Gastrocnemius medialis (tissue), 4 donors: ENCODE measurements at regions of chr12 and their contacts with region 1.

Region 1: DNA sequence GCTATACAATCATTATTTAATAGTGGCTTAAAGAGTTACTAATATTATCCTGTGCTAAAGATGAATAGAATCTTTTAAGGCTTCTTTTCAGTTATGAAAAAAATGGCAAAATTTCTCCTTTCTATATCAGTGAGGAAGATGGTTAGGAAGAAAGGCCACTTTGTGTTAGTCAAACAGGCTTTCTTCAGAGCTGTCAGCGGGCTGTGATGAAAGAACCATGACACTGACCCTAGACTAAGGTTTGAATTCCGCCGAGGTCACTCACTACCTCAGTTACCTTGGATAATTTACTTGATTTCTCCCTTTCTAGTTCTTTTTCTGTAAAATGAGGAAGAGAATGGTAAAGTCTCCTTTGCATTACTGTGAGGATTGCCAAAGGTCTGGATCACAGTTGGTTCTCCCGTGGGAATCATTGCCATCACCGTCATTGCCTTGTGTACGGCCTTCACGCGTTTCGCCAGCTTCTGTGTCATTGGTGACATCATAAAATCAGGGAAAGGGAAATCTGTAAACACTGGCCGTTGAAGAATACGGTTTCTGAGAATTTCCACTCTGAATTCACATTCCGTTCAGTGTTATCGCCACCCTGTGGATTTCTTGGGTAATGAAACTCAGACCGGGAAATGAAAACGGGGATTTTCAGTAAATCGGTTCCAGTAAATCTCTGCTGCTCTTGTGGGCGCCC is 26.7 kb upstream of the YBX3 start:
- DNase-seq: peak; percentile 45 to 66
- ATAC-seq: peak; percentile 93 to 97
- H3K4me3 ChIP-seq: peak overlapping the region; percentile 42 to 51 (median 48)
- H3K27ac ChIP-seq: peak overlapping the region; percentile 50 to 72 (median 62)
- H3K4me1 ChIP-seq: peaks cover 0 to 5% of the 10 kb centered on the region in 2 donors
- H3K27me3 ChIP-seq: no peaks in the 10 kb centered on the region
- CTCF ChIP-seq: peak; percentile 86 to 93 (median 89)
- POLR2A ChIP-seq: peak in 1 of 2 donors; percentile 13

Region 2: GRCh38 chr12:10235761-10236631 is 513.8 kb before region 1 on chr12:
- in situ Hi-C with region 1: loop called in 2 of 4 experiments (anchors 10 kb)
- intact Hi-C with region 1: loop called (anchors 5 kb)
- DNase-seq: no peak
- ATAC-seq: peak; percentile 70 to 76
- H3K4me3 ChIP-seq: no peak overlapping the region
- H3K27ac ChIP-seq: no peak overlapping the region
- H3K4me1 ChIP-seq: no peaks in the 10 kb centered on the region
- H3K27me3 ChIP-seq: no peaks in the 10 kb centered on the region
- CTCF ChIP-seq: peak; percentile 77 to 85 (median 84)
- POLR2A ChIP-seq: no peak

Region 3: DNA sequence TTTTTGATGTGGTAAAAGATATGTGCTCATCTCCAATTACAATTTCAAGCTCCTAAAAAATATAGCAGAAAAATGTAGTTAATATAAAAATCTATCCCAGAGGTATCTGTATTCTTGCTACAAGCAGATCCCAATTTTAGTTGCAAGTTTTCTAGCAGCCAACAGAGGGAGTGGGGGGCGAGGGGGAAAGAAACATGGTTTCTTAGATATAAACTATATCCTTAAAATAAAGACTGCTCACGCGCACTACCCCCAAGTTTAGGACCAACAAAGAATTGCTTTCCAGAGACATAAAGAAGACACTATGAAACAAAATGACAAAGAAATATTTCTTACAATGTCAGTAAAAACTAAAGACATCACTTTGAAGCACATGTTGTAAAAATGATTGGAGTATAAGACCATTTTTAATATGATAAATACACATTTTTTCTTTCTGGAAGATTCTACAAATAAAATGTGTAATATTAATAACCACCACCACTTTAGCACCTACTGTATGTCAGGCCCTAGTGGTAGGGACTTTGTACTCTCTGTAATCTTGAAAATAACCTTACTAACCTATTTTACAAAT is 141.9 kb before region 1 on chr12:
- in situ Hi-C with region 1: loop called (anchors 5 to 10 kb)
- intact Hi-C with region 1: loop called (anchors 1 kb)
- DNase-seq: no peak
- ATAC-seq: no peak
- H3K4me3 ChIP-seq: no peak overlapping the region
- H3K27ac ChIP-seq: no peak overlapping the region
- H3K4me1 ChIP-seq: peaks cover 11 to 12% of the 10 kb centered on the region in 2 donors
- H3K27me3 ChIP-seq: no peaks in the 10 kb centered on the region
- CTCF ChIP-seq: no peak
- POLR2A ChIP-seq: no peak

Region 4: GRCh38 chr12:10613349-10614055 is 136.3 kb before region 1 on chr12 and contains the start of gene MAGOHB:
- in situ Hi-C with region 1: loop called (anchors 5 to 10 kb)
- intact Hi-C with region 1: loop called (anchors 1 kb)
- DNase-seq: peak; percentile 82 to 93
- ATAC-seq: peak; percentile 98 to 99
- H3K4me3 ChIP-seq: peak within 1 kb of the TSS; percentile 68 to 89 (median 79)
- H3K27ac ChIP-seq: peak within 1 kb of the TSS; percentile 90 to 91 (median 90)
- H3K4me1 ChIP-seq: peaks cover 12 to 16% of the 10 kb centered on the region in 2 donors
- H3K27me3 ChIP-seq: no peaks in the 10 kb centered on the region
- CTCF ChIP-seq: peak in 2 of 5 experiments; percentile 49 to 52
- POLR2A ChIP-seq: peak; percentile 51 to 82
- total RNA-seq, gene MAGOHB: 0.80 to 6.3 (median 3.8) TPM

Region 5: GRCh38 chr12:10673660-10674384 is 76.0 kb before region 1 on chr12 and contains the start of gene STYK1:
- in situ Hi-C with region 1: no loop called
- intact Hi-C with region 1: loop called (anchors 2 kb)
- DNase-seq: no peak
- ATAC-seq: peak in 1 of 2 donors; percentile 57
- H3K4me3 ChIP-seq: peak within 1 kb of the TSS; percentile 50 to 63 (median 52)
- H3K27ac ChIP-seq: no peak within 1 kb of the TSS
- H3K4me1 ChIP-seq: peaks cover 5 to 6% of the 10 kb centered on the region in 2 donors
- H3K27me3 ChIP-seq: peaks cover 18 to 25% (median 24%) of the 10 kb centered on the region in 3 donors
- CTCF ChIP-seq: peak; percentile 48 to 81 (median 77)
- POLR2A ChIP-seq: no peak
- total RNA-seq, gene STYK1: 0.12 TPM in 1 of 4 donors, not detected in the others

Region 6: GRCh38 chr12:10690906-10691305 is 58.9 kb before region 1 on chr12:
- in situ Hi-C with region 1: loop called in 1 of 4 experiments (anchors 10 kb)
- intact Hi-C with region 1: loop called (anchors 5 kb)
- DNase-seq: no peak
- ATAC-seq: no peak
- H3K4me3 ChIP-seq: no peak overlapping the region
- H3K27ac ChIP-seq: peak overlapping the region in 1 of 4 donors; percentile 13
- H3K4me1 ChIP-seq: peaks cover 8 to 19% of the 10 kb centered on the region in 2 donors
- H3K27me3 ChIP-seq: no peaks in the 10 kb centered on the region
- CTCF ChIP-seq: no peak
- POLR2A ChIP-seq: no peak

Region 7: DNA sequence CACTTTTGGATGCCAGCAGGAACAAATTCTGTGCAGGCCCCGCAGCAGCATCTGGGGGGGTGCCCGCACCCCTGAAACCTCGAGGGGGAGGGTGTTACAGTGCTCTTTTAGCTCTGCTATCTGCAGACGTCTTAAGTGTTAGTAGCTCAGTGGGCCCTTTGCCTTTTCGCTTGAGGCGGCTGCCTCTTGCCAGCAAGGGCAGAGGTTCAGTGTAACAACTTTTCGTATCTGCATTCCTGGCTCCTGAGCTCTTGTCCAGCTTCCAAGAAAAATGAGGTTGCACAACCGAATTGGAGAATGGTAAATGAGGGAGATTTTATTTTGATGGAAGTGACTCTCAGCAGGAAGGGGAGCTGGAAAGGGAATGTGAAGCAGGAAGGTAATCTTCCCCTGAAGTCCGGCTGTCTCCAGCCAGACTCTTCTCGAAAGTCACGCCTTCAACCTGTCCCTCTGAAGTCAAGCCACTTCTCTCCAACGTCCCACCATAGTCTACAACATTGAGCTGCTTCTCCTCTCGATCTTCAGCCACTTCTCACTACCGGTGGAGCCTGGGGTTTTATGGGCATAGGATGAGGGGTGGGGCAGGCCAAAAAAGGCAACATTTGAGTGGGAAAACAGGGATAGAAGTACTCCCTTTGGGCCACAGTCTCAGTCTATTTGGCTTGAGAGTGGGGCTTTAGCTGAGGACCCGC is 219.1 kb after region 1 on chr12:
- in situ Hi-C with region 1: no loop called
- intact Hi-C with region 1: no loop called
- DNase-seq: peak in 1 of 2 donors; percentile 16
- ATAC-seq: peak in 1 of 2 donors; percentile 61
- H3K4me3 ChIP-seq: no peak overlapping the region
- H3K27ac ChIP-seq: no peak overlapping the region
- H3K4me1 ChIP-seq: peaks cover 4 to 5% of the 10 kb centered on the region in 2 donors
- H3K27me3 ChIP-seq: no peaks in the 10 kb centered on the region
- CTCF ChIP-seq: no peak
- POLR2A ChIP-seq: no peak